IMR-90 (cell line): ENCODE measurements at regions of chr5 and their contacts with region 1.

Region 1: GRCh38 chr5:134503088-134503946 is 22.2 kb upstream of the JADE2 start:
- DNase-seq: peak; percentile 99
- ATAC-seq: peak; percentile 96
- H3K4me3 ChIP-seq: no peak overlapping the region
- H3K27ac ChIP-seq: peak overlapping the region; percentile 94
- H3K4me1 ChIP-seq: peaks cover 22% of the 10 kb centered on the region
- H3K27me3 ChIP-seq: no peaks in the 10 kb centered on the region
- CTCF ChIP-seq: no peak
- POLR2A ChIP-seq: peak; percentile 54; the same call in 1 of the 2 replicates
- RAD21 ChIP-seq: peak; percentile 38

Region 2: GRCh38 chr5:134225618-134226440 is 277.5 kb before region 1 on chr5 and contains the start of gene PPP2CA:
- CTCF ChIA-PET with region 1: no interaction called
- POLR2A ChIA-PET with region 1: no interaction called
- dilution Hi-C with region 1: no loop called
- in situ Hi-C with region 1: no loop called
- intact Hi-C with region 1: no loop called
- DNase-seq: peak; percentile 98
- ATAC-seq: peak; percentile 93
- H3K4me3 ChIP-seq: peak within 1 kb of the TSS; percentile 68
- H3K27ac ChIP-seq: peak within 1 kb of the TSS; percentile 90
- H3K4me1 ChIP-seq: peaks cover 6% of the 10 kb centered on the region
- H3K27me3 ChIP-seq: no peaks in the 10 kb centered on the region
- CTCF ChIP-seq: no peak
- POLR2A ChIP-seq: peak; percentile 88
- RAD21 ChIP-seq: no peak
- total RNA-seq, gene PPP2CA: 70.6 and 191 TPM in 2 replicates

Region 3: DNA sequence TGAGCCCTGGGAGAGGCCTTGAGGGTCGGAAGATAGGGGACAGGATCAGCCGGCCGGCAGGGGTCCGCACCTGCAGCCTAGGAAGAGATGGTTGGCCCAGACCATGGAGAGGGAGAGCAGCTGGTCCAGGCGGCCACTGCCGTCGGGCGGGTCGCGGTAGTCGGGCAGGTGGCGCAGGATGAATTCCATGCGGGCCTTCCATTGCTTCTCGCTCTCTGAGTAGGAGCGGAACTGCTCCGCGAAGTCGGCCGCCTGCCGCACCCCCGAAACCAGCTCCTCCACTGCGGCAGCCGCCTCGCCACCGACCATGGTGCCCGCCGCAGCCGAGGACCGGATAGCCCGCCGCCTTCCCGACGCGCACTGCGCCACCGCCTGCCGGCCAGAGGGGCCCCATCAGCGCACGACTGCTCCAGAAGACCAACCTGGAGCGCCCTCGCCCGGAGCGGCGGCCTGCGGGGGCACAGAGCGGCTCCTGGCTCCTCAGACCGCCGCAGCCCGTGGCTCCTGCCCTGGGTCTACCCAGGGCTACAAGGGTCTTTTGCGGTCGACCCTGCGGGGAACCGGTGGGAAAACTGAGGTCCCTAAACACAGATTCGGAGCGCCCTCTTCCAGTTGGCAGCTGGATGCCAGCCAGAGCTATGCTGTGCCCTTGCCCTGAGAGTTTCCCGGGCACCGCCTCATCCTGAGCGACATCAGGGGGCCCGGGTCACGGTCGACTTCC is 91.6 kb before region 1 on chr5 and contains the start of gene CDKN2AIPNL:
- CTCF ChIA-PET with region 1: no interaction called
- POLR2A ChIA-PET with region 1: no interaction called
- dilution Hi-C with region 1: no loop called
- in situ Hi-C with region 1: no loop called
- intact Hi-C with region 1: loop called (anchors 1 kb)
- DNase-seq: peak; percentile 80
- ATAC-seq: peak; percentile 100
- H3K4me3 ChIP-seq: peak within 1 kb of the TSS; percentile 71
- H3K27ac ChIP-seq: peak within 1 kb of the TSS; percentile 87
- H3K4me1 ChIP-seq: peaks cover 8% of the 10 kb centered on the region
- H3K27me3 ChIP-seq: no peaks in the 10 kb centered on the region
- CTCF ChIP-seq: peak; percentile 90
- POLR2A ChIP-seq: peak; percentile 74
- RAD21 ChIP-seq: peak; percentile 63
- total RNA-seq, gene CDKN2AIPNL: 18.1 and 27.5 TPM in 2 replicates

Region 4: DNA sequence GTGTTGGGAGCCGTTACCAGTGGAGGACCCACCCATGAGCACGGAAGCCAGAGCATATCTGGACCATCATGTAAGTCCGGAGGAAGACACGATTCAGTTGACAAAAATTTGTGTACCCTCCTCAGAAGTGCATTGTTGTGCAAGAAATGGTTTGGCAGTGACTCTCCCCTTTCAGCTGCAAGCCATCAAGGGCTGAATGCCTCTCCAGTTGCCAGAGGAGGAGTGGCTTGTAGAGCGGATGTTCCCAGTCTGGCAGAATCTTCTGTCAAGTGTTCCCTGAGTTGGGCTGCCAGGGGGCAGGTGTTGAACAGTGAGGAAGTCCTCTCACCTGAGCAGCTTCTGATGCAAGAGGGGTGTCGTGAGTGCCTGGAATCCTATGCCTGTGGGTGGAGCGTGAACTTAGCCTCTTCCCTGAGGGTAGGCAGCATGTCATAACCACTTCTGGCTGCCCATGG is 64.1 kb before region 1 on chr5:
- CTCF ChIA-PET with region 1: no interaction called
- POLR2A ChIA-PET with region 1: no interaction called
- dilution Hi-C with region 1: no loop called
- in situ Hi-C with region 1: no loop called
- intact Hi-C with region 1: loop called (anchors 2 kb)
- DNase-seq: peak; percentile 98
- ATAC-seq: peak; percentile 64
- H3K4me3 ChIP-seq: no peak overlapping the region
- H3K27ac ChIP-seq: peak overlapping the region; percentile 88
- H3K4me1 ChIP-seq: peaks cover 31% of the 10 kb centered on the region
- H3K27me3 ChIP-seq: no peaks in the 10 kb centered on the region
- CTCF ChIP-seq: 0 out of 2 replicates have a peak, but pooled peaks have one; percentile 7
- POLR2A ChIP-seq: peak; percentile 26; the same call in 1 of the 2 replicates
- RAD21 ChIP-seq: peak; percentile 35